Ovary (tissue), 10 donors: ENCODE measurements at regions of chr14 and their contacts with region 1.

Region 1: DNA sequence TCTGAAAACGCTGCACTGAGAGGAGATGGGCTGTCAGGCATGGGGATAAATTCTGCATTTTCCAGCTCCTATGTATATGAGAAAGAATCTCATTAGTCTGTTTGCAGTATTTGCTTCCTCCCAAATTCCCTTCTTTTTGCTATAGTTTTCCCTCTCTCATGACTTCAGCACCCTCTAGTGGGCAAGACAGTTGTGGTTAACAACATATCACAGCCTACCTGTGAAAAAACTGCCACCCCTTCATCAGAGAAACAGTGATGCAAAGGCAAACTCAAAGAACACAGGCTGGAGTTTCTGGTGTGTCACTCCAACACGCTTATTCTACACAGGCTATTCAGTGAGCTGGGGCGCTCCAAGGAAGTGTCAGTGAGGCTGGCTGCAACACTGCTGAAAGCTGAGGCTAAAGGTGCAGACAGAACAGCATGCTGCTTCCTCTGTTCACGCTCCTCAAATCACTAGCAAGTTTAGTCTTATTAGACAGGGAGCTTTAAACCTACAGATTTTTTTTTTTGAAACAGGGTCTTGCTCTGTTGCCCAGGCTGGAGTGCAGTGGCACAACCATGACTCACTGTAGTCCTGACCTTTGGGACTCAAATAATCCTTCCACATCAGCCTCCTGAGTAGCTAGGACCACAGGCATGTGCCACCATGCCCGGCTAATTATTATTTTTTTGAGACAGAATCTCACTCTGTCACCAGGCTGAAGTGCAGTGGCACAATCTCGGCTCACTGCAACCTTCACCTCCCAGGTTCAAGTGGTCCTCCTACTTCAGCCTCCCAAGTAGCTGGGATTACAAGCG is 19.3 kb downstream of the ZC2HC1C start:
- DNase-seq: peak in 3 of 5 donors; percentile 18 to 55 (median 44)
- H3K4me3 ChIP-seq: no peak overlapping the region
- H3K27ac ChIP-seq: no peak overlapping the region
- H3K4me1 ChIP-seq: no peaks in the 10 kb centered on the region
- H3K27me3 ChIP-seq: no peaks in the 10 kb centered on the region
- CTCF ChIP-seq: peak; percentile 51 to 61 (median 61)
- EP300 ChIP-seq: no peak
- POLR2A ChIP-seq: no peak

Region 2: GRCh38 chr14:74913986-74914573 is 174.7 kb before region 1 on chr14:
- intact Hi-C with region 1: loop called (anchors 5 to 10 kb)
- DNase-seq: peak; percentile 71 to 84 (median 75)
- H3K4me3 ChIP-seq: no peak overlapping the region
- H3K27ac ChIP-seq: peak overlapping the region in 1 of 2 donors; percentile 19
- H3K4me1 ChIP-seq: peaks cover 4% of the 10 kb centered on the region
- H3K27me3 ChIP-seq: no peaks in the 10 kb centered on the region
- CTCF ChIP-seq: peak; percentile 21 to 72 (median 43)
- EP300 ChIP-seq: no peak
- POLR2A ChIP-seq: no peak

Region 3: GRCh38 chr14:74945823-74946682 is 142.7 kb before region 1 on chr14:
- intact Hi-C with region 1: loop called (anchors 5 to 10 kb)
- DNase-seq: peak; percentile 68 to 82 (median 81)
- H3K4me3 ChIP-seq: no peak overlapping the region
- H3K27ac ChIP-seq: no peak overlapping the region
- H3K4me1 ChIP-seq: peaks cover 3% of the 10 kb centered on the region
- H3K27me3 ChIP-seq: no peaks in the 10 kb centered on the region
- CTCF ChIP-seq: peak; percentile 65 to 88 (median 71)
- EP300 ChIP-seq: no peak
- POLR2A ChIP-seq: no peak

Region 4: GRCh38 chr14:75383721-75384120 is 294.9 kb after region 1 on chr14:
- intact Hi-C with region 1: no loop called
- DNase-seq: no peak
- H3K4me3 ChIP-seq: no peak overlapping the region
- H3K27ac ChIP-seq: no peak overlapping the region
- H3K4me1 ChIP-seq: peaks cover 1% of the 10 kb centered on the region
- H3K27me3 ChIP-seq: no peaks in the 10 kb centered on the region
- CTCF ChIP-seq: no peak
- EP300 ChIP-seq: no peak
- POLR2A ChIP-seq: no peak